ENCODE measurements at regions of chr16 and their contacts with region 1.

Region 1: DNA sequence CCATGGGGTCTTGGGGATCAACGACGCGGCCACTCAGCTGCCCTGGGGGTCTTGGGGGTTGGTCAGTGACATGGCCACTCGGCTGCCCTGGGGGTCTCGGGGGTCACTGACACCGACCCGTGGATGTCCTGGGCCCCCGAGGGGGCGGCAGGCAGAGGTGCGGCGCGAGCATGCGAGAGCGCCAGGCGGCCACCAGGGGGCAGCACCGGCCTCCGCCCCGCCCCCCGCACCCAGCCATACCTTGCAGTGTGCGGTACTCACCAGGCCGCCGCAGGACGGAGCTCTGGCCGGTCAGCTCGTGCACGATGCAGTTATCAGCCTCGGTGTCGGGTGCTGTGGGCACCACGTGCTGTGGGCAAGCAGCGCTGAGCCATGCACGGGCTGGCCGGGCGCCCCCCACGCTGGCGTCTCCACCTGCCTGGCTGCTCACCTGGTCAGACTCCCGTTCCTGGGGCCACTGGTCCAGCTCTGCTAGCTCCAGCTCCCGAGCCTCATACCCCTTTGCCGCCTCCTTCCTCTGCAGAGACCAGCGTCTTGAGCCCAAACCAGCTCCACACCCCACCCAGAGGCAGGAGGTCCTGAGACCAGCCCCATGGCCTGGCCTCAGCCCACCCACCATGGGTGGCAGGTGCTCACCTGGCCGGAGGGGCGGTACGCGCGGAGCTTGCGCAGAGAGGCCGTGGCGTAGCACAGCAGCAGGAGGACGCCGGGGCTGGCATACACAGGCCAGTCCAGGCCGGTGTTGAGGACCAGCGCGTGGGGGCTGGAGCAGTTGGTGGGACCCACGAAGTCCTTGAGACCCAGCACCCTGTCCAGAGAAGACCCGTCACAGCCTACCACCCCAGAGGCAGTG is 31.2 kb downstream of the CTU2 start:
- DNase-seq: peak; percentile 55 to 80 (median 75)
- H3K4me3 ChIP-seq: no peak overlapping the region
- H3K4me3 Mint-ChIP-seq: no peak overlapping the region
- H3K27ac ChIP-seq: peak overlapping the region; percentile 6
- H3K27ac Mint-ChIP-seq: peak overlapping the region in 4 of 7 donors; percentile 52 to 78 (median 54)
- H3K4me1 ChIP-seq: peaks cover 6% of the 10 kb centered on the region
- H3K4me1 Mint-ChIP-seq: peaks cover 0 to 13% (median 2%) of the 10 kb centered on the region in 4 donors
- H3K27me3 ChIP-seq: no peaks in the 10 kb centered on the region
- H3K27me3 Mint-ChIP-seq: no peaks in the 10 kb centered on the region

Region 2: DNA sequence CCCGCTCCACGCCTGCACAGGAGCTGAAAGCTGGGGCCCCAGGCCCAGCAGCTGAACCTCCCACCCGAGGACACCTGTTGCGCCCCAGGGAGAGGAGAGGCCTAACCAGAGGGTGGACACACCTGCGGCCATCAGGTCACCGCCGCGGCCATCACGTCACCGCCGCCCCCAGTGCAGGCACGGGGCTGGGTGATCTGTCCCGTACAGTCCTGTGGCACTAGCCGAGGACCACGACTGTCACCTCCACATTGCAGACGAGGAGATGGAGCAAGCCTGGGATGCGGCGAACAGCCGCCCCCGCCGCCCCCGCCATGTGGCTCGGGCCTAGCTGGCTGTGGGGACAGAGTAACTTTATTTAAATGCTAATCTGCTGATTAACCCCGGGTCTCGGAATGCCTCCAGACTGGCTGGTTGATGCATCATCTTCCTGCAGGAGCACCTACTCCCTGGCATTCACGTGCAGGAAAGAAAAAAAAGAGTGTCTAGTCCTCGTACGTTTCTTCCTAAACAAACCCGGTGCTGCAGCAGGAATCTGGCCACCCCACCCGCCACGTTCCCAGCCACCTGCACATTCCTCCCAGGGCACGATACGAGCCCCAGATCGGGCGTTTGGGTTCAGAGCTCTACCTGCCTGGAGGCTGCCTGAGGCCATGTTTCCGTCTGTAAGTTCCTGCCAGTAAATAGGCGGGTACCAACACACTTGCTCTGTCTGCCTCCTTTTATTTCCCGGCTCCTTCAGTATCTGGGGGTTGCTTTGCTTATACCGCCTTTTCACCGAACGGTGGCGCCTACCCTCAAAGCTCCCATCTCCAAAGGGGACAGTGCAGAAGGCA is 17.6 kb after region 1 on chr16:
- CTCF ChIA-PET with region 1: interaction called, 40 read pairs
- POLR2A ChIA-PET with region 1: interaction called, 3 read pairs
- intact Hi-C with region 1: no loop called
- DNase-seq: peak in 3 of 5 donors; percentile 30 to 38 (median 31)
- H3K4me3 ChIP-seq: no peak overlapping the region
- H3K4me3 Mint-ChIP-seq: no peak overlapping the region
- H3K27ac ChIP-seq: no peak overlapping the region
- H3K27ac Mint-ChIP-seq: peak overlapping the region; percentile 29 to 81 (median 74)
- H3K4me1 ChIP-seq: peaks cover 35% of the 10 kb centered on the region
- H3K4me1 Mint-ChIP-seq: peaks cover 17 to 43% (median 24%) of the 10 kb centered on the region in 4 donors
- H3K27me3 ChIP-seq: no peaks in the 10 kb centered on the region
- H3K27me3 Mint-ChIP-seq: no peaks in the 10 kb centered on the region

Region 3: DNA sequence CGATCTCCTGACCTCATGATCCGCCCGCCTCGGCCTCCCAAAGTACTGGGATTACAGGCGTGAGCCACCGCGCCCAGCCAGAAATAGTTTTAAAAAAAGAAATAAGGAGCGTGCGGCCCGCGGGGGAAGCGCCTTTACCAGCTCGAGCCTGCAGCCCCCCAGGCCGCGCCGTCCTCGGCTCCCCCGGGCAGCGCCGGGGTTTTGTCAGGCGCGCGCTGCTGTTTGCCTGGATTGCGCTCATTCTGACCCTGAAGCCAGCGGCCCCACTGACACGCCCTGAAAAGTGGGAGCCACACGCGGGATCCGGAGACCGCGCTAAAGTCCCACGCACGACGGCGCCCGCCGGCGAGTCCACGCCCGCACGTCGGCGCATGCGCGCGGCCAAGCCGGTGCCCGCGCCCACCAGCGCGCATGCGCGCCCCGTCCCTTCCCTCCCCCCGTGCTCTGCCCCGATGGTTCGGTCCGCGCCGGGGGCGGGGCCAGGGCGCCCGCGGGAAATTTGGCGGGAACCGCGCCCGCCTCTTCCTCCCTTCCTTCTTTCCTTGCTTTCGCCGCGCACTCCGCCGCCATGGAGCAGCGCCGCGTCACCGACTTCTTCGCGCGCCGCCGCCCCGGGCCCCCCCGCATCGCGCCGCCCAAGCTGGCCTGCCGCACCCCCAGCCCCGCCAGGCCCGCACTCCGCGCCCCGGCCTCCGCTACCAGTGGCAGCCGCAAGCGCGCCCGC is 65.9 kb after region 1 on chr16 and contains the start of gene CDT1:
- CTCF ChIA-PET with region 1: interaction called, 13 read pairs
- POLR2A ChIA-PET with region 1: interaction called, 9 read pairs
- intact Hi-C with region 1: no loop called
- DNase-seq: peak; percentile 74 to 90 (median 84)
- H3K4me3 ChIP-seq: peak within 1 kb of the TSS; percentile 36 to 68
- H3K4me3 Mint-ChIP-seq: peak within 1 kb of the TSS; percentile 83 to 91 (median 88)
- H3K27ac ChIP-seq: peak within 1 kb of the TSS; percentile 55
- H3K27ac Mint-ChIP-seq: peak within 1 kb of the TSS; percentile 73 to 95 (median 89)
- H3K4me1 ChIP-seq: peaks cover 26% of the 10 kb centered on the region
- H3K4me1 Mint-ChIP-seq: peaks cover 6 to 24% (median 16%) of the 10 kb centered on the region in 4 donors
- H3K27me3 ChIP-seq: no peaks in the 10 kb centered on the region
- H3K27me3 Mint-ChIP-seq: no peaks in the 10 kb centered on the region
- total RNA-seq, gene CDT1: 0.17 TPM

Region 4: DNA sequence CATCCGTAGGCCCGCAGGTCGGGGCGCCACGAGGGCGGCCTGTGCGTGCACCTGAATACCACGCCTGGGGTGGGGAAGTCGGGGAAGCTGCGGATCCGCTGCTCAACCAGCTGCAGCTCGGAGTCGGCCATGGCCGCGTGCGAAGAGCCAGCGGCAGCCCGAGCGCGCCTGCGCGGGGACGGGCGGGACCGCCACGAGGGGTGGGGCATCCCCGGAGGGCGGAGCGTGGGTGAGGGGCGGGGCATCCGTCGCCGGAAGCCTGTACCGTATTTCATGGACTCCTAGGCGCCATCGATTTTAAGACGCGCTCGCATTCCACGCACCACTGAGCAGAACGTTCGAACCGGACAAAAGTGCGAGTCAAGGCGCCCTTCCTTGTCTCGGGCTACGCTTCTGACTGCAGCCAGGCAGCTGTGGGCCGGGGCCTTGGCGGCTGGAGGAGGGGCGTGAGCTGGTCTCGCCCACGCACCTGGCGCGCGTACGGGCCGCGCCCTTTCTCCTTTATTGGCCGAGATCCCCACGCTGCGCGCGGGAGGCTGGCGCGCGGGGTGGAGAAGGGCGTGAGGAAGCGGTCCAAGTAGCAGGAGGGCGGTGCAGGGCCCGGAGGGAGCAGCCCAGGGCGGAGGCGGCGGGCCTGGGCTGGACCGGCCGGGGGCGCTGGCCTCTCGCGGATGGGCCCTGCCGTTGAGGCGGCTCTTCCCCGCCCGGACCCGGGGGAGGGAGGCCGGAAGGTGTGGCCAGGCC is 74.4 kb after region 1 on chr16 and contains the start of gene APRT:
- CTCF ChIA-PET with region 1: interaction called, 9 read pairs
- POLR2A ChIA-PET with region 1: interaction called, 14 read pairs
- intact Hi-C with region 1: no loop called
- DNase-seq: peak; percentile 94 to 99 (median 97)
- H3K4me3 ChIP-seq: peak within 1 kb of the TSS; percentile 90 to 94
- H3K4me3 Mint-ChIP-seq: peak within 1 kb of the TSS; percentile 95 to 100 (median 97)
- H3K27ac ChIP-seq: peak within 1 kb of the TSS; percentile 67
- H3K27ac Mint-ChIP-seq: peak within 1 kb of the TSS; percentile 88 to 98 (median 97)
- H3K4me1 ChIP-seq: peaks cover 21% of the 10 kb centered on the region
- H3K4me1 Mint-ChIP-seq: peaks cover 1 to 28% (median 15%) of the 10 kb centered on the region in 4 donors
- H3K27me3 ChIP-seq: no peaks in the 10 kb centered on the region
- H3K27me3 Mint-ChIP-seq: no peaks in the 10 kb centered on the region
- total RNA-seq, gene APRT: 171 to 175 TPM

Region 5: GRCh38 chr16:89171463-89172170 is 434.1 kb after region 1 on chr16 and contains the start of gene CDH15:
- CTCF ChIA-PET with region 1: interaction called, 5 read pairs
- POLR2A ChIA-PET with region 1: no interaction called
- intact Hi-C with region 1: loop called (anchors 1 kb)
- DNase-seq: peak; percentile 88 to 97 (median 93)
- H3K4me3 ChIP-seq: peak within 1 kb of the TSS in 1 of 2 donors; percentile 57
- H3K4me3 Mint-ChIP-seq: peak within 1 kb of the TSS; percentile 59 to 87 (median 74)
- H3K27ac ChIP-seq: no peak within 1 kb of the TSS
- H3K27ac Mint-ChIP-seq: peak within 1 kb of the TSS in 6 of 7 donors; percentile 49 to 89 (median 74)
- H3K4me1 ChIP-seq: peaks cover 25% of the 10 kb centered on the region
- H3K4me1 Mint-ChIP-seq: peaks cover 4 to 8% (median 7%) of the 10 kb centered on the region in 4 donors
- H3K27me3 ChIP-seq: no peaks in the 10 kb centered on the region
- H3K27me3 Mint-ChIP-seq: peaks cover 0 to 1% of the 10 kb centered on the region in 2 donors
- total RNA-seq, gene CDH15: not detected

Region 6: DNA sequence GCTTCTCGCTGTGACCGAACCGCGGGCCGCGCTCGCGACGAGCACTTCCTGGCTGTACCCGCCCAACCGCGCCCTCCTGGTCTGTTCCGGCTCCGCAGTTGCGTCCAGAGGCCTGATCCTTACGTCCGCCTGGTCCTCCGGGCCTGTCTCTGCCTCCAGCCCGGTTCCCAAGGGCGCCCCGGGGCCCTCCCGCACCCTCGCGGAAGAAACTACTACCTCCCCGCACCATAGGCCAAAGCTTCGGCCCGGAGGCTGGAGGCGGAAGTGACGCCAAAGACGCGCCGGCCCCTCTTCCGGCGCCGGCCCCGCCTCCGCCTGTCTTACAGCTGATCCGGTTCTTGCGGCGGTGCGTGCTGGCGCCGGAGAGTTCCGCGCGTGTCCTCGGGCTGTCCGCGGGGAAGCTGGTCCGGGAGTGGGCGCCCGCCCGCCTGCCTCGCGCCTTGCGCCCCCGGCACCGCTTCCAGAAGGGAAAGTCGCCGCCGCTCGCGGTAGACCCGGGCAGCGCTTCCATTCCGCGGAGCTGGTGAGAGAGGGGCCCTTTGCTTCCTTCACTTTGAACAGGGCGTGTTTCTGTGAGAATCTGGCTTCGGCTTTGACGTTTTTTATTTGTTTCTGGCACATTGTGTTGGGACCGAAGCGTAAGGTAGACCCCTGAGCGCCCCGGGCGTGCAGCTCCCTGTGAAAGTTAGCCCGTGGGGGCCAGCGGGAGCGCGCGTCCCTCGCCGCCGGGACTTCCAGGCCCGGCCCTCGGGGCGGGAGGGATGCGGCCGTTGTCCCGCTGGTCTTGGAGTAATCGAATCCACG is 480.1 kb after region 1 on chr16 and contains the start of gene ZNF778:
- CTCF ChIA-PET with region 1: interaction called, 10 read pairs
- POLR2A ChIA-PET with region 1: no interaction called
- intact Hi-C with region 1: loop called (anchors 1 kb)
- DNase-seq: peak; percentile 83 to 87 (median 85)
- H3K4me3 ChIP-seq: peak within 1 kb of the TSS; percentile 76 to 91
- H3K4me3 Mint-ChIP-seq: peak within 1 kb of the TSS; percentile 73 to 94 (median 92)
- H3K27ac ChIP-seq: peak within 1 kb of the TSS; percentile 94
- H3K27ac Mint-ChIP-seq: peak within 1 kb of the TSS; percentile 64 to 98 (median 92)
- H3K4me1 ChIP-seq: peaks cover 21% of the 10 kb centered on the region
- H3K4me1 Mint-ChIP-seq: peaks cover 10 to 37% (median 26%) of the 10 kb centered on the region in 4 donors
- H3K27me3 ChIP-seq: no peaks in the 10 kb centered on the region
- H3K27me3 Mint-ChIP-seq: no peaks in the 10 kb centered on the region
- total RNA-seq, gene ZNF778: 13.1 to 15.9 TPM